ENCODE measurements at regions of chr17 and their contacts with region 1.

Region 1: DNA sequence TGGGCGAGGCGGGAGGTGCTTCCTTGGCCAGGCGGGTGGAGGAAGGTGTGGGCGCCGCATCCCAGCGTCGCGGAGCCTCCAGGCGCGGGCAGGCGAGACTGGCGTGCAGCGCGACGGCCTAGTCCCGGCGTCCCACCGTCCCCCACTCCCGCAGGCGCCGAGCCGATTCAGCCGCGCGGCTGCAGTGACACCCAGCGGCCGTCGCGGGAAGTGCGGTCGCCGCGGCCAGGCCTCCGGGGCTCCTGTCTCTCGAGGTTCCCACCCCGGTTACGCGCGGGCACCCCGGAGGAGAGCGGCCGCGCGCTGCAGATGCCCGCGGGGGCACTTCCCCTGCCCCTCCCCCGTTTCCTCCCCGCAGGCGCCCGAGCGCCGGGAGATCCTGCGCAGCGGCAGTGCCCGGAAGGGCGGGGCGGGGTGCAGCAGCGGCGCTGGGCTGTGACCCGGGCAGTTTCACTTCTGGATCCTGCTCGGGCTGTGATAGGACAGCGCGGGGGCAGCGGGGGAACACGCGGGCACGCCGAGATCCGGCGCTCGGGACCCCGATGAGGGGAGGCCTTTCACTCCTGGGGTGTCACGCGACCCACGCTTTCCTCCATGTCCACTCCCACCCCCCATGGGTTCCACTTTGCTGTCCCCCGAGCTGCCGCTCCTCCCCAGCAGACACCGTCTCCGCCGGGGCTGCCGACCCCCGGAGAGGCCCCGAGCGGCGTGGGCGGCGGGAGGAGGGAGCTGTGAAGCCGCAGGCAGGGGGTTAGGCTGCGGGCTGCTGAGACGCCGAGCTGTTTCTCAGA is 16.6 kb downstream of the GRB7 start:
- DNase-seq: peak; percentile 96
- H3K4me3 Mint-ChIP-seq: peak overlapping the region; percentile 76
- H3K27ac Mint-ChIP-seq: peak overlapping the region; percentile 59
- H3K4me1 Mint-ChIP-seq: peaks cover 59% of the 10 kb centered on the region
- H3K27me3 Mint-ChIP-seq: no peaks in the 10 kb centered on the region

Region 2: GRCh38 chr17:39401412-39402243 is 352.7 kb before region 1 on chr17 and contains the start of gene FBXL20:
- CTCF ChIA-PET with region 1: no interaction called
- intact Hi-C with region 1: loop called (anchors 5 kb)
- DNase-seq: peak; percentile 96
- H3K4me3 Mint-ChIP-seq: peak within 1 kb of the TSS; percentile 91
- H3K27ac Mint-ChIP-seq: peak within 1 kb of the TSS; percentile 90
- H3K4me1 Mint-ChIP-seq: peaks cover 61% of the 10 kb centered on the region
- H3K27me3 Mint-ChIP-seq: no peaks in the 10 kb centered on the region
- total RNA-seq, gene FBXL20: 14.2 to 15.4 TPM

Region 3: DNA sequence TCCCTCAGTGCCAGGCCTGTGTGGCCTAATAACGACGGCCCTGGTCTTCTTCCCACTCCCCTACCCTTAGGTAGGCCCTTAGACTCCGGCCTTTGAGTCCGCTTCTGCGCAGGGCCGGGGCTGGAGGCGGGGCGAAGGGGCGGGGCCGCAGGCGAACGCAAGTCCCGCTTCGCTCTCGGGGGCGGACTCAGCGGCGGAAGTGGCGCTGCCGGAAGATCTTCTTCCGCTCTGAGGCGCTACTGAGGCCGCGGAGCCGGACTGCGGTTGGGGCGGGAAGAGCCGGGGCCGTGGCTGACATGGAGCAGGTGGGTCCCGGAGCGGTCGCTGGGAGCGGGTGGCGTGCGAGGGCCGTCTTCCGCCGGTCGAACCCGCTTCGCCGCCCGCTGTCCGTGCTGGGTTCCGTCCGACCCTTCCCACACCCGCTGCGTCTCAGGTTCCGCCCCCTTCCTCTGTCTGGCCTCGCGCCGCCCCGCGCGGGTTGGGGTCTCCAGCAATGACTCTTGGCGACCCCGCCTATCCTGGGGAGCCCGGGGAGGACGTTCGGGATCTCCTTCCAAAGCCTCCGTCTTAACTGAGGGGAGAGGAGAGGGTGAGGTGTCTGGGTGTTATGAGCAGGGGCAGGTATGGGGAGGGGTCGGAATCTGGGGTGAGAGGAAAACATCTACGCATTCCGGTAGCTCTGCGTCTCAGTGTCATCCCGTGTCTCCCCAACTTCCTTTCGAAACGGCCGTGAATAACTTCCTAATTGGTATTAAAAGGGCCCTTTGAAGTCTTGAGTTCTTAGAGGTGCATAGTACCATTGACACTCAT is 117.2 kb before region 1 on chr17 and contains the start of gene STARD3:
- CTCF ChIA-PET with region 1: interaction called, 7 read pairs
- intact Hi-C with region 1: loop called (anchors 1 kb)
- DNase-seq: peak; percentile 94
- H3K4me3 Mint-ChIP-seq: peak within 1 kb of the TSS; percentile 92
- H3K27ac Mint-ChIP-seq: peak within 1 kb of the TSS; percentile 93
- H3K4me1 Mint-ChIP-seq: peaks cover 49% of the 10 kb centered on the region
- H3K27me3 Mint-ChIP-seq: no peaks in the 10 kb centered on the region
- total RNA-seq, gene STARD3: 56.1 to 56.8 TPM

Region 4: DNA sequence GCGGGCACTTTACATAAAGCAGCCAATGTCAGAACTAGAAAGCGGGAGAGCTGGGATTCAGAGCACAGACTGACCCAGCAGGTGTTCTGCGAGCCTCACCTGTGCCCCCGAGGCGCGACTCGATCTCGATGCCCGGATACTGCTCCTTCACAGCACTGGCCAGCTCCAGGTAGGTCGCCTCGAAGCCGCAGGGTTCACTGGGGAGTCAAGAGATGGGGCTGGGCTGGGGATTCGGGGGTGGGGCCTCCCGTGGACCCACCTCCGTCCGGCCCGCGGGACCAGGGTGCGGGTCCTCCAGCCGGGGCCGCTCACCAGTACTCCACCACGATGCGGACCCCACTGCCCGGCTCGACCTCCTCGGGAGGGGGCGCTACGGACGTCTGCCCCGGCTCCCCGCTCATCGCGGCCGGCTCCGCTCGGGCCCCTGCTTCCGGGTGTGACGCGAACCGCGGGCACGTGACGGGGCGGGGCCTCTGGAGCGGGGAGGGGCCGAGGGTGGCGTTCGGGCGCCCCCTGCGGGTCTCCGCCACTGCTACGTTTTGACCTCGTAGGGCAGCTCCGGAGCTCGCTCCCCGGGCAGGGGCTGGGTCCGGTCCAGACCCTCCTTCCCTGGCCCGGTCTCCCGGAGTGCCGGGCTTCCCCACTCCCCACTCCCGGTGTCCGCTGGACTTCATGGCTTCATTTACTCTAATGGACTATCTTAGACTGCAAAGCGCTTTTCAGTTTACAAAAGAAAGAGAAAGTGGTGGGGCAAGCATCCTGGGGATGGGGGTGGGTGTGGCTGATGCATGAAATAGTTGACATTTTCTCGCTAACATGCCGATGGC is 24.0 kb before region 1 on chr17 and contains the start of gene MIEN1:
- CTCF ChIA-PET with region 1: interaction called, 8 read pairs
- intact Hi-C with region 1: loop called (anchors 2 kb)
- DNase-seq: peak; percentile 95
- H3K4me3 Mint-ChIP-seq: peak within 1 kb of the TSS; percentile 87
- H3K27ac Mint-ChIP-seq: peak within 1 kb of the TSS; percentile 84
- H3K4me1 Mint-ChIP-seq: peaks cover 14% of the 10 kb centered on the region
- H3K27me3 Mint-ChIP-seq: no peaks in the 10 kb centered on the region
- total RNA-seq, gene MIEN1: 35.2 to 36.5 TPM

Region 5: DNA sequence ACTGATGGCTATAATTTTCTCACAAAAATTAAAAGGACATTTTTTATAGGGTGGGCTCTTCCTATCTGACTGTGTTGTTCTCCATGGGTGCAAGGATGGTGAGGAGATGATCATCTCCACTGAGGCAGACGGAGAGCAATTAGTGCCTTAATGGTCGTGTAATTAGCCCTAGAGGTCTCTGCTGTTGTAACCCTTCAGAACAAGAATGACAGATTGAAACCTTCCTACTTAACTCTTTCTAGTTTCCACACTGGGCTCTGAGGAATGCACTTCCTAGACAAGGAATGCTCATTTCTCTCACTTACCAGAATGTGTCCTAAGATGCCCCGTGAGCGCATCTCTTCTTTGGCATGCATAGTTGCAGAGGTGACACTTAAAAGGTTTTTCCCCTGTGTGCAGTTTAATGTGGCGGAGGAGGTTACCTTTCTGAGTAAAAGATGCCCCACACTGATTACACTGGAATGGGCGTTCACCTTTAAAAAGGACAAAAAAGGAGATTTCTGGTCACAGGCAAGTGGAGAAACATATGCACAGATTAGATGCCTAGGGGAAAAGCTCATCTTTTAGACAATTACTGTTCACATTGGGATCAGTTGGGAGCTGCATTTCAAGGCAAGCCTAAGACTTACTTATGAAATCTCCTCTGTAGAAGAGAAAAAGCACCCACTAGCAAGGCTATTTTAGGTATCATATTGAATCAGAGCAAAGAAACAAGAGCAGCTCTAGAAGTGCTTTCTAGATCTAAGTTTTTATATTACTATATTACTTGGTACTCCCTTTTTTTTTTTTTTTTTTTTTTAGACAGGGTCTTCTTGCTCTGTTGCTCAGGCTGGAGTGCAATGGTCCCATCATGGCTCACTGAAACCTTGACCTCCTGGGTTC is 37.0 kb after region 1 on chr17:
- CTCF ChIA-PET with region 1: interaction called, 3 read pairs
- intact Hi-C with region 1: loop called (anchors 2 kb)
- DNase-seq: peak; percentile 75
- H3K4me3 Mint-ChIP-seq: no peak overlapping the region
- H3K27ac Mint-ChIP-seq: peak overlapping the region; percentile 86
- H3K4me1 Mint-ChIP-seq: peaks cover 57% of the 10 kb centered on the region
- H3K27me3 Mint-ChIP-seq: no peaks in the 10 kb centered on the region

Region 6: DNA sequence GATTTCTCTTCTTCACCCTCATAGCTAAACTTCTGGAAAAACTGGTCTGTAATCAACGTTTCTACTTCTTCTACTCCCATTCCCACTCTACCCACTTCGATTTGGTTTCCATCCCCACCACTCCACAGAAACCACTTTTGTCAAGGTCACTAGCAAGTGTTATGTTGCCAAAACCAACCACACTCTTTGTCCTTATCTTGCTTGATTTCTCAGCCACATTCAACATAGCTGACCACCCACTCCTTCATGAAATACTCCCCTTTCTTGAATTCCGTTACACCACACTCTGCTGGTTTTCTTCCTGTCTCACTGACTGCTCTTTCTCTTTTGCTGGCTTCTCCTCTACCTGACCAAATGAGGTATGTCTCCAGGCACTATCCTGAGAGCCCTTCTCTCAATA is 97.9 kb after region 1 on chr17:
- CTCF ChIA-PET with region 1: no interaction called
- intact Hi-C with region 1: no loop called
- DNase-seq: no peak
- H3K4me3 Mint-ChIP-seq: no peak overlapping the region
- H3K27ac Mint-ChIP-seq: peak overlapping the region; percentile 2
- H3K4me1 Mint-ChIP-seq: peaks cover 49% of the 10 kb centered on the region
- H3K27me3 Mint-ChIP-seq: no peaks in the 10 kb centered on the region

Region 7: DNA sequence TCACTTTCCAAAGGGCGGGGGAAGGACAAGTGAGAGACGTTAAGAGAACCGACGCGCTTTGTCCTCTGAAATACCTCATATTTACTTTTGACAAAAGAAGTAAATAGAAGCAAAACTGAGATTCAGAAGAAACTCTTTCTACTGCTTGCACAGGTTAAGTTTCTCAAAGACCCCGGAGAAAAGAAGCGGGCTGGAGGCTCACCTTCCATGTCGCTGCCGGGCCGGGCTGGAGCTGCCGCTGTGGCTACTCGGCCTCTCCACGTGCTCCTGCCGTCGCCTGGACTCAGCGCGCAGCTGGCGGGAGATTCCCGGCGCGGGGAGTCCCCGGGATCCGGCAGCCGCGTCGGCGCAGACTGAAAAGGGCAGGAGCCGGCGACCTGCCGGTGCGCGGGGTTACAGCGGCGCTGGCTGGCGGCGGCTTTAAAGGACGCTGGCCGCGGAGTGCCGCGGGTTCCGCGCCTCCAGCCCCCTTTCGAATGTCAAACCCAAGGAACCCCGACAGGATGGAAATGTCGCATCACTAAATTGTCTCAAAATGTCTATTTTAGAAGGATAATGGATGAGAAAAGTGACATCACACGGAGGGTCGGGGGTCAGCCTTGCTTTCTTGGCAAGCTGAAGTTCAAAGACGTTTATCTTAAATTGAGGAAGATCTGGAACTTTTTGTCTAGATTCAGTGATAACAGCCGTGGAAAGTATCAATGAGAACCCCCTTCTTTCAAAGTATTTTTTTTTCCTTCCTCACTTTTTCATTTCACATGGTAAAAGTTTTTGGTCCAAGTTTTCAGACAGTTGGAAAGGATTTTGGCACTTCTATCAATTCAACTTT is 109.8 kb after region 1 on chr17 and contains the start of gene IKZF3:
- CTCF ChIA-PET with region 1: interaction called, 4 read pairs
- intact Hi-C with region 1: loop called (anchors 1 kb)
- DNase-seq: peak; percentile 94
- H3K4me3 Mint-ChIP-seq: peak within 1 kb of the TSS; percentile 92
- H3K27ac Mint-ChIP-seq: peak within 1 kb of the TSS; percentile 95
- H3K4me1 Mint-ChIP-seq: peaks cover 61% of the 10 kb centered on the region
- H3K27me3 Mint-ChIP-seq: no peaks in the 10 kb centered on the region
- total RNA-seq, gene IKZF3: 34.2 to 36.1 TPM

Region 8: GRCh38 chr17:39980351-39981206 is 226.2 kb after region 1 on chr17 and contains the start of gene PSMD3:
- CTCF ChIA-PET with region 1: no interaction called
- intact Hi-C with region 1: loop called (anchors 1 kb)
- DNase-seq: peak; percentile 99
- H3K4me3 Mint-ChIP-seq: peak within 1 kb of the TSS; percentile 88
- H3K27ac Mint-ChIP-seq: peak within 1 kb of the TSS; percentile 80
- H3K4me1 Mint-ChIP-seq: peaks cover 39% of the 10 kb centered on the region
- H3K27me3 Mint-ChIP-seq: peaks cover 2% of the 10 kb centered on the region
- total RNA-seq, gene PSMD3: 122 to 125 TPM